ENCODE measurements at regions of chrX and their contacts with region 1.

Region 1: DNA sequence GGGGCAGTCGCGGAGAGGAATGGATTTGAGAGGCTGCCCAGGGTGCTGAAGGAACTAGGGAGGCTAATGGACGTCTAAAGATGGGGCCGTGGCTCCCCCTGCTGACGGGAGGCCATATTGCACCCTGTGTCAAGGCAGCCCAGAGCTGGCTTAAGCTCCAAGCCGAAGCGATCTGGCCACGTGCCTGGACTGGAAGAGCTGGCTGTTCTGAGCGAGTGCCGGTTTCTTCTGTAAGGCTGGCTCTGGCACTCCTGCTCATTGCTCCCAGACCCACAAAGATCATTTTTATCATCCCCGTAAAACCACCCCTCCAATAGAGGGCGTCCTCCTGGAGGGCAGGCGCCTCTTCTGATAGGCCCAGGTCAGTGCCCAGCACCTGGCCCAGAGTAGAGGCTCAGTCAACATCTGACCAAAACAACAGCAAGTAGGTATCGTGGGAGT is 5.6 kb downstream of the PNCK start:
- DNase-seq: peak; percentile 43 to 83
- H3K4me3 ChIP-seq: no peak overlapping the region
- H3K27ac ChIP-seq: no peak overlapping the region
- H3K4me1 ChIP-seq: no peaks in the 10 kb centered on the region
- H3K27me3 ChIP-seq: peaks cover 21% of the 10 kb centered on the region; the same call in 1 of the 2 replicates
- CTCF ChIP-seq: peak; percentile 85

Region 2: GRCh38 chrX:153032397-153033118 is 635.4 kb before region 1 on chrX:
- CTCF ChIA-PET with region 1: no interaction called
- POLR2A ChIA-PET with region 1: no interaction called
- intact Hi-C with region 1: loop called (anchors 10 kb)
- DNase-seq: peak in 1 of 2 experiments; percentile 64
- H3K4me3 ChIP-seq: no peak overlapping the region
- H3K27ac ChIP-seq: no peak overlapping the region
- H3K4me1 ChIP-seq: no peaks in the 10 kb centered on the region
- H3K27me3 ChIP-seq: peaks cover 55% of the 10 kb centered on the region
- CTCF ChIP-seq: peak; percentile 93

Region 3: GRCh38 chrX:153539171-153539978 is 128.6 kb before region 1 on chrX:
- CTCF ChIA-PET with region 1: interaction called, 12 read pairs
- POLR2A ChIA-PET with region 1: no interaction called
- intact Hi-C with region 1: loop called (anchors 5 kb)
- DNase-seq: peak in 1 of 2 experiments; percentile 81
- H3K4me3 ChIP-seq: no peak overlapping the region
- H3K27ac ChIP-seq: no peak overlapping the region
- H3K4me1 ChIP-seq: no peaks in the 10 kb centered on the region
- H3K27me3 ChIP-seq: peaks cover 25% of the 10 kb centered on the region; the same call in 1 of the 2 replicates
- CTCF ChIP-seq: peak; percentile 83

Region 4: DNA sequence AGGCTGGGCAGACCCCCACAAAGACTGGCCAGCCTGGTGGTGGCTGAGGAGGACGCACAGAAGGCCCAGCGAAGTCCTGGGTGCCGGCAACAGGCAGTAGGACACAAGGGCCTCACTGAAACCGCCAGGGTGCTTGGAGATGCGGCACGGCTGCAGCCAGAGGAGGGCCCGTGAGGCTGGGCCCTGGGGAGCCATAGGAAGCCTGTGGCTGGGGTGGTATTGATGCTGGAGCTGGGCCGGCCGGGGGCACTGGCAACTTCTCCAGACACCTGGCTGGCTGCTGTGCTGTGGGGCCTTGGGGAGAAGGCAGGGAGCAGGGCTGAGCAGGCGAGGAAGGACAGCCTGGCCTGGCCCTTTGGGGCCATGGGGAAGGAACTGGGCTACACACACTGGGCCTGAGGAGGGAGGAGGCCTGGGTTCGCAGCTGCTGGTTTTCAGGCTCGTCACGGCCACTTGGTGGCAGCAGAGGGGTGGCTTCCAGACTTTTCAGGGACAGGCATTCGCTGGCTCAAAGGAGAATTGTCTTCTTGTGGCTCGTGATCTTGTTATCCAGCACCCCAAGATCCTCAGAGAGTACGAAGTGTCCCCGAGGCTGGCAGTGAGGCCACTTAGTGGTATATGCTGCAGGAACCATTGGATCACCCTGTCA is 113.3 kb before region 1 on chrX:
- CTCF ChIA-PET with region 1: interaction called, 7 read pairs
- POLR2A ChIA-PET with region 1: no interaction called
- intact Hi-C with region 1: loop called (anchors 2 kb)
- DNase-seq: peak in 1 of 2 experiments; percentile 76
- H3K4me3 ChIP-seq: no peak overlapping the region
- H3K27ac ChIP-seq: no peak overlapping the region
- H3K4me1 ChIP-seq: no peaks in the 10 kb centered on the region
- H3K27me3 ChIP-seq: peaks cover 70% of the 10 kb centered on the region
- CTCF ChIP-seq: peak; percentile 74

Region 5: GRCh38 chrX:153609917-153610428 is 58.0 kb before region 1 on chrX:
- CTCF ChIA-PET with region 1: interaction called, 7 read pairs
- POLR2A ChIA-PET with region 1: no interaction called
- intact Hi-C with region 1: loop called (anchors 1 kb)
- DNase-seq: peak in 1 of 2 experiments; percentile 74
- H3K4me3 ChIP-seq: no peak overlapping the region
- H3K27ac ChIP-seq: no peak overlapping the region
- H3K4me1 ChIP-seq: no peaks in the 10 kb centered on the region
- H3K27me3 ChIP-seq: peaks cover 71% of the 10 kb centered on the region
- CTCF ChIP-seq: peak; percentile 64

Region 6: DNA sequence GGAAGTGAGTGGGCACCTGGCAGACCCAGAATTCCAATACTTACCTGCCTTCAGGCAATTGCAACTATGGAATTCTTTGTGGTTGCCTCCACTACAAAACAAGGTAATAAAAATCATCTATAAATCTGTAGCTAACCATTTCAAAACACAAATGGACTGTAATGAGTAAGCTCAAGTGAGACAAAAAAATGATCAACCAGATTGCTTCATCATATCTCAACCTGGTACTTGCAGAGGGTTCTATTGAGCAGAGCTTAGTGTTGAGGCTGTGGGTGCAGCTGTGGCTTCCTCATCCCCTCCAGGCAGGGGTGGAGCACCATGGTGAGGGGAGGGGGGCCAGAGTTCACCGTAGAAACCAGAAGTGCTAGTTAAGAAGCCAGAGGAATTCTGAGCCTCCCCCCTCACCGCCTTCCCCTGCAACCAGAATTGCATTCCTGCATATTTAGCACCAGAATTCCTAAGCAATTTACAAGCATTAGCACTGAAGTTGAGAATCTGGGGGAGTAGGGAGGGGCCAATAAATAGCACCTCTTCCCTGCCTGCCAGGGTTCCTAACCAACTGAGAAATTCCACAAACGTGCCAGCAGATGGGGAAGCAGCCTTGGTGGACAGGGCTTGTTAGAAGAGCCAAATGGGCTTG is 928.4 kb after region 1 on chrX:
- CTCF ChIA-PET with region 1: interaction called, 15 read pairs
- POLR2A ChIA-PET with region 1: no interaction called
- intact Hi-C with region 1: no loop called
- DNase-seq: peak; percentile 96 to 98
- H3K4me3 ChIP-seq: peak overlapping the region; percentile 32; the same call in 1 of the 2 replicates
- H3K27ac ChIP-seq: peak overlapping the region; percentile 98
- H3K4me1 ChIP-seq: peaks cover 68% of the 10 kb centered on the region
- H3K27me3 ChIP-seq: no peaks in the 10 kb centered on the region
- CTCF ChIP-seq: no peak

Measured in PC-9 (cell line).